ENCODE measurements at regions of chr19 and their contacts with region 1.

Region 1: DNA sequence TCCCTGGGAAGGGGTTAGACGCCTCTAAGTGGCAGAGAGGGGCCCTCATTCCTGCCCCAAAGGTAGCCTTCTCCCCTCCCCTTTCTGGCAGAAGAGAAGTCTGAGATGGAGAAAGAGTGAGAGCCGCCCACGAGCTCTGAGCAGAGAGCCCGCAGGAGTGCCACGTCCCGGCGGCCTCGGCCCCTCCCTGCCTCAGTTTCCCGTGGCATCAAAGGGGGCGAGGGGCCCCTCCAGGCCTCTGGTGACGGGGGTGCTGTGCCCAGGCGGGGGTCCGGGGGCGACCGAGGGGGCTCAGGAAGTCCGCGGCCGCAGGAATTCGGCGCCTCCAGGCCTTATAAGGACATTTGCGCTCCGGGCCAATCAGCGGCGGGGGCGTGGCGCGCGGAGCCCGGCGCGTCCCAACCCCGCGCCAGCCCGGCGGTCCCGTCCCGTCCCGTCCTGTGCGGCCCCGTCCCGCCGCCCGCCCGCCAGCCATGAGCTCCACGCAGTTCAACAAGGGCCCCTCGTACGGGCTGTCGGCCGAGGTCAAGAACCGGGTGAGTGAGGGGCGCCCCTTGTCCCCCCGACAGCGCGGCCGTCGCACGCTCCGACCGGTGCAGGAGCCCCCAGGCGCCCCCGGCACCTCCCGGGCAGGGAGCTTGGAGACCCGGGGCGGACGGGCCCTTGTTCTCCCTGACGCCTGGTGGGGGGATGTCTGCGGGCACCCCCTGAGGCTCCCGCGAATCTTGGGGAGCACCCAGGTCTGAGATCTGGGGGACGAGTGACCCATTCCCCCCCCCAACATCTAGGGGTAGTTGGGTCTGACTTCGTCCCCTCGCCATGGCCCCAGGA is at the start of gene CNN2:
- DNase-seq: peak; percentile 66
- ATAC-seq: peak; percentile 76
- H3K4me3 ChIP-seq: peak within 1 kb of the TSS; percentile 95
- H3K27ac ChIP-seq: no peak within 1 kb of the TSS
- H3K4me1 ChIP-seq: no peaks in the 10 kb centered on the region; the same call in 1 of the 2 replicates
- H3K27me3 ChIP-seq: no peaks in the 10 kb centered on the region
- CTCF ChIP-seq: no peak
- total RNA-seq, gene CNN2: 97.9 and 107 TPM in 2 replicates

Region 2: DNA sequence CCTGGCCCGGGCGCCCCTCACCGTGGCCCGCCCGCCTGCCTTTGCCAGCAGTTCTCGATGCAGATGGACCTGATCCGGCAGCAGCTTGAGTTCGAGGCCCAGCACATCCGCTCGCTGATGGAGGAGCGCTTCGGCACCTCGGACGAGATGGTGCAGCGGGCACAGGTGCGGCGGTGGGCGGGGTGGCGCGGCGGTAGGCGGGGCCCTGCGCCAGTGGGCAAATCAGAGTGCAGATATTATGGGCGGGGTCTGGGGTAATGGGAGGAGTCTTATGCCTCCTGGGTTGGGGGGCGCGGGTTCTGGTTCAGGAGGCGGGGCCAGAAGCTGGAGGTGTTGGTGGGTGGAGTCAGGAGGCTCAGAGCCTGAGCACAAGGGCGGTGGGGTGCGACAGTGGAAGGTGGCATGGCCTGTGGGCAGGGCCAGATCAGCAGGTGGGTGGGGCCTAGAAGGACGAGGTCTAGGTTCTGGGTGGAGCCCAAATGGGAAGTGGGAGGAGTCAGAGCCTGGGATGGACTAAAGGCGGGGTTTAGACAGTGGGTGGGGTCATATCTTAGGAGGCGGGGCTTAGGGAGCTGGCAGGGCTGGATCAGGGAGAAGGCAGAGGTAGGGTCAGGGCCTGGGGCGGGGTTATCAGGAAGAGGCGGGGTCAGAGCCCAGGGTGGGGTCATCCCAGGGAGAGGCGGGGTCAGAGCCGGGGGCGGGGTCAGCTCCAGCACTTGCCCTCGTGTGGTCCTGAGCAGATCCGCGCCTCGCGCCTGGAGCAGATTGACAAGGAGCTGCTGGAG is 429.1 kb after region 1 on chr19:
- CTCF ChIA-PET with region 1: no interaction called
- POLR2A ChIA-PET with region 1: interaction called, 11 read pairs
- intact Hi-C with region 1: no loop called
- DNase-seq: peak; percentile 85
- ATAC-seq: peak; percentile 58
- H3K4me3 ChIP-seq: peak overlapping the region; percentile 53; the same call in 1 of the 2 replicates
- H3K27ac ChIP-seq: no peak overlapping the region
- H3K4me1 ChIP-seq: peaks cover 10% of the 10 kb centered on the region; the same call in 1 of the 2 replicates
- H3K27me3 ChIP-seq: peaks cover 14% of the 10 kb centered on the region
- CTCF ChIP-seq: no peak